ENCODE measurements at regions of chr20 and their contacts with region 1.

Region 1: DNA sequence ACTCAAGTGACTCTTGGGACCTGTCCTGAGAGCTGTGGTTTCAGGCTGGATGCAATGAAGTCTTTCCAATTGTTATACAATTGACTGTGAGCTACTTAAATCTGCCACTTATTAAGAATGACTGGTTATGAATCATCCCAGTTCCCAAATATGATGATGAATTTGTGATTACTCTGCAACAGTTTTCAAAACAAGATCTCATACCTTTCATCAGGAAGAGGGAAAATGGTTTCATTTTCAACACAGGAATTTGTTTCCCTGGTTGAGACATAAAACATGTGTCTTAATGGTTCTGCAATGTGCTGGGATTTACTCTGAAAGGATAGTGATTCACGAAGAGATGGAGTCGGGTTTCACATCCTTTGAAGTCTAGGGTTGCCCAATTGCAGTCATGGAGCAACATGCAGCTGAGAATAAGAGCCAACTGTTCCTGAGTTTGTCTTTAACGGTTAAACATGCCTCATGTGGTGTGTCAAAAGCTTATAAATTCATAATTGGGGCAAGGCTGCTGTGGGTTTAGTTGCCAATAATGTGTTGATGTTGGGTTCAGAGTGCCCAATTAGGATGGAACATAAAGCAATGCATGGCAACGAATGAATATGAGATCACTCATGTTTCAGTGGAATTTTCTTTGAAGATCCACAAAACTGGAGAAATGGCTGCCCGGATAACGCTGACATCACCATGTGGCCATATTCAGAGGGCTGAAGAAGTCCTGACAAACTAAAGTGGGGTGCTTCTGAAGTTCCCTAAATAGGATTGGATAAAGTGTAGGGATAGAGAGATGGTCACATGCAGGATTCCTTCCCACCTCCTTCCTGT is 41.0 kb downstream of the CYP24A1 start:
- DNase-seq: no peak
- H3K4me3 ChIP-seq: no peak overlapping the region
- H3K27ac ChIP-seq: peak overlapping the region; percentile 68 to 89 (median 78)
- H3K4me1 ChIP-seq: peaks cover 0 to 23% (median 17%) of the 10 kb centered on the region in 3 donors
- H3K27me3 ChIP-seq: peaks cover 0 to 3% (median 0%) of the 10 kb centered on the region in 4 donors
- CTCF ChIP-seq: no peak
- POLR2A ChIP-seq: no peak

Region 2: GRCh38 chr20:53643031-53643832 is 489.6 kb before region 1 on chr20:
- intact Hi-C with region 1: no loop called
- DNase-seq: no peak
- H3K4me3 ChIP-seq: peak overlapping the region in 1 of 4 donors; percentile 34
- H3K27ac ChIP-seq: peak overlapping the region; percentile 72 to 89 (median 86)
- H3K4me1 ChIP-seq: peaks cover 12 to 25% (median 14%) of the 10 kb centered on the region in 3 donors
- H3K27me3 ChIP-seq: no peaks in the 10 kb centered on the region
- CTCF ChIP-seq: no peak
- POLR2A ChIP-seq: peak in 2 of 4 donors; percentile 22 to 40

Region 3: GRCh38 chr20:54062812-54063280 is 70.0 kb before region 1 on chr20:
- intact Hi-C with region 1: no loop called
- DNase-seq: no peak
- H3K4me3 ChIP-seq: no peak overlapping the region
- H3K27ac ChIP-seq: no peak overlapping the region
- H3K4me1 ChIP-seq: peaks cover 0 to 31% (median 12%) of the 10 kb centered on the region in 3 donors
- H3K27me3 ChIP-seq: no peaks in the 10 kb centered on the region
- CTCF ChIP-seq: peak; percentile 28 to 63 (median 42)
- POLR2A ChIP-seq: no peak

Region 4: GRCh38 chr20:54382422-54382821 is 249.6 kb after region 1 on chr20:
- intact Hi-C with region 1: no loop called
- DNase-seq: no peak
- H3K4me3 ChIP-seq: no peak overlapping the region
- H3K27ac ChIP-seq: no peak overlapping the region
- H3K4me1 ChIP-seq: no peaks in the 10 kb centered on the region
- H3K27me3 ChIP-seq: no peaks in the 10 kb centered on the region
- CTCF ChIP-seq: no peak
- POLR2A ChIP-seq: no peak

Region 5: DNA sequence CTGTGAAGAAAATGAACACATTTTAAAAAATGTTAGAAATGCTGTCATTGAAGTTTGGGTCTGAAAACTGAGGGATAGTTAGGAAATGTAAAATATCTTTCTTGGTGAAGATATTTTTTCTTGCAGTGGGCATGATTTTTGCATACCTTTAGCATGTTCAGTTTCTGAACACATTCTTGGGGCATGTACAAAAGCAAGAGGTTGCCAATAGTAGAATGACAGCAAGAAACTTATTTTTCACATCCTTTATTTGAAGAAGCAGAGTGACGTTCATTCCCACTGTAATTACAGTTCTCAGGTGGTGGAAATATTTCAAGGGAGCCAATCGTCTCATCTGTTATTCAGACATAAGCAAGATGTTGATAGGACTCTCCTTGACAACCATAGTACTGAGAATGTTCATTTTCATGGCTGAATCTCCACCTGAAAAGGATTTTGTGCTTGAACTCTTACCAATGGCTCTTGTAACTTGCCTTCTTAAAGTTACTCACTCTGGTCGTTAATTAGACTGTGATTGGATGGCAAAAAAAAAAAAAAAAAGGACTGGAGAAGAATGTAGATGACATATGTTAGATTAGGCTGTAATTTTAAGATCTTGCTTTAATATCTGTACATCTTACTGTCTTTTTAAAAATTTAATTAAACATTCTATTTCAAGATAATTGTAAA is 417.0 kb after region 1 on chr20:
- intact Hi-C with region 1: loop called (anchors 10 kb)
- DNase-seq: no peak
- H3K4me3 ChIP-seq: no peak overlapping the region
- H3K27ac ChIP-seq: no peak overlapping the region
- H3K4me1 ChIP-seq: no peaks in the 10 kb centered on the region
- H3K27me3 ChIP-seq: no peaks in the 10 kb centered on the region
- CTCF ChIP-seq: no peak
- POLR2A ChIP-seq: no peak

Region 6: GRCh38 chr20:54573838-54574237 is 441.0 kb after region 1 on chr20:
- intact Hi-C with region 1: no loop called
- DNase-seq: no peak
- H3K4me3 ChIP-seq: no peak overlapping the region
- H3K27ac ChIP-seq: no peak overlapping the region
- H3K4me1 ChIP-seq: no peaks in the 10 kb centered on the region
- H3K27me3 ChIP-seq: no peaks in the 10 kb centered on the region
- CTCF ChIP-seq: no peak
- POLR2A ChIP-seq: no peak

Measured in esophagus squamous epithelium (tissue), 5 donors.